ENCODE measurements at regions of chr3 and their contacts with region 1.

Region 1: DNA sequence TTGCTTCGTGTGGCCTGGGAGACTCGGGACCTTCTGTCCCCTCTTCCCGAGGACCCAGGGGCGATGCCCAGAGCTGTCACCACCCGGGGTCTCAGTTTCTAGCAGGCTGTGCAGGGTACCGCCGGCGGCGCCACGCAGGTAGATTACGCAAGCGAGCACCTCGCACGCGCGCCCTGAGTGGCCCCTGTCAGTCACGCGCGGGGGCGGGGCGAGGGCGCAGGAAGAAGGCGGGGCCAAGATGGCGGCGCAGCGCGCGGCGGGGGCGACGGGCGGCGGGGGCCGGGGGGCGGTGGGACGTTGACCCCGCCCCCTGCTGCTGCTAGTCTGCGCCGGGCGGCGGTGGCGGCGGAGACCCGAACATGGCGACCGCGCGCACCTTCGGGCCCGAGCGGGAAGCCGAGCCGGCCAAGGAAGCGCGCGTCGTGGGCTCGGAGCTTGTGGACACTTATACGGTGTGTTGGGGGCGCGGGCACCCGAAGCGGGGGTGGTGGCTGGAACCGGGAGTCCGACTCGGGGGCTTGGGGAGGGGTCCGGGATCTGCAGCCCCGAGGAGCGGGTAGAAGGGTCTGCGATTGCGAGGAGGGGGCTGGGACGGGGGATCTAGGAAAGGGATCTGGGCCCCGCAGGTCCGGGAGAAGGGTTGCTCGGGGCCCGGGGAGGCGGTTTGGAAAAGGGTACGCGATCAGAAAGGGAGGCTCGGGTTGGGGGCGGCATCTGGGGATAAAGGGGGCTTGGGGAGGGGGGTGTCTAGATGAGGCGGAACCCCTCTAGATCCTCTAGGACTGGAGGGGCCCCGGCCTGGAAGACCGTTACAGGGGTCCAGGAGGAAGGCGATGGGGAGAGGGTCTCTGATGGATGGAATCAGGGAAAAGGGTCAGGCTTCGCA is at the start of gene NISCH:
- DNase-seq: peak; percentile 98
- ATAC-seq: peak; percentile 96
- H3K4me3 Mint-ChIP-seq: peak within 1 kb of the TSS; percentile 91
- H3K27ac Mint-ChIP-seq: peak within 1 kb of the TSS; percentile 91
- H3K4me1 Mint-ChIP-seq: peaks cover 40% of the 10 kb centered on the region
- H3K27me3 Mint-ChIP-seq: no peaks in the 10 kb centered on the region
- CTCF ChIP-seq: no peak
- total RNA-seq, gene NISCH: 79.6 and 89.5 TPM in 2 replicates

Region 2: DNA sequence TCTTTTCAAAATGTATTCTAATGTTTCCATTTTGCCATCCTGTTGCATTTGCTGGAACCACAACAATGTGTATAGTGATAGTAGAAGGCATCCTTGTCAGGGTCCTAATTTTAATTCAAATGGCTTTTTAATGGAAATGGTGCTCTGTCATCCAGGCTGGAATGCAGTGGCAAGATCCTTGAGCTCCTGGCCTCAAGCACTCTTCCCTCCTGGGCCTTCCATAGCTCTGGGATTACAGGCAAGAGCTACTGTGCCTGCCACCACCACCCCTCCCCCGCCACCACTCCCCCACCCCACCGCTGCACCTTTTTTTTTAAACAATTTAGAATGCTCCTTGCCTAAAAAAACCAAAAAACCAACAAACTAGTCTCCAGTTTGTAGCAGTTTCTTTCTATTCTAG is 661.3 kb before region 1 on chr3:
- CTCF ChIA-PET with region 1: no interaction called
- POLR2A ChIA-PET with region 1: no interaction called
- intact Hi-C with region 1: no loop called
- DNase-seq: no peak
- ATAC-seq: no peak
- H3K4me3 Mint-ChIP-seq: no peak overlapping the region
- H3K27ac Mint-ChIP-seq: no peak overlapping the region
- H3K4me1 Mint-ChIP-seq: no peaks in the 10 kb centered on the region
- H3K27me3 Mint-ChIP-seq: peaks cover 18% of the 10 kb centered on the region
- CTCF ChIP-seq: no peak

Region 3: GRCh38 chr3:51982782-51983577 is 472.5 kb before region 1 on chr3 and contains the start of gene ACY1:
- CTCF ChIA-PET with region 1: no interaction called
- POLR2A ChIA-PET with region 1: no interaction called
- intact Hi-C with region 1: loop called (anchors 5 kb)
- DNase-seq: peak; percentile 70
- ATAC-seq: peak; percentile 79
- H3K4me3 Mint-ChIP-seq: peak within 1 kb of the TSS; percentile 86
- H3K27ac Mint-ChIP-seq: peak within 1 kb of the TSS; percentile 91
- H3K4me1 Mint-ChIP-seq: peaks cover 23% of the 10 kb centered on the region
- H3K27me3 Mint-ChIP-seq: no peaks in the 10 kb centered on the region
- CTCF ChIP-seq: no peak
- total RNA-seq, gene ACY1: 24.9 and 26.7 TPM in 2 replicates

Region 4: GRCh38 chr3:52238761-52239701 is 216.5 kb before region 1 on chr3 and contains the start of gene TWF2:
- CTCF ChIA-PET with region 1: no interaction called
- POLR2A ChIA-PET with region 1: interaction called, 4 read pairs
- intact Hi-C with region 1: loop called (anchors 1 kb)
- DNase-seq: peak; percentile 94
- ATAC-seq: peak; percentile 86
- H3K4me3 Mint-ChIP-seq: peak within 1 kb of the TSS; percentile 96
- H3K27ac Mint-ChIP-seq: peak within 1 kb of the TSS; percentile 93
- H3K4me1 Mint-ChIP-seq: peaks cover 72% of the 10 kb centered on the region
- H3K27me3 Mint-ChIP-seq: no peaks in the 10 kb centered on the region
- CTCF ChIP-seq: no peak
- total RNA-seq, gene TWF2: 74.1 and 76.7 TPM in 2 replicates

Region 5: DNA sequence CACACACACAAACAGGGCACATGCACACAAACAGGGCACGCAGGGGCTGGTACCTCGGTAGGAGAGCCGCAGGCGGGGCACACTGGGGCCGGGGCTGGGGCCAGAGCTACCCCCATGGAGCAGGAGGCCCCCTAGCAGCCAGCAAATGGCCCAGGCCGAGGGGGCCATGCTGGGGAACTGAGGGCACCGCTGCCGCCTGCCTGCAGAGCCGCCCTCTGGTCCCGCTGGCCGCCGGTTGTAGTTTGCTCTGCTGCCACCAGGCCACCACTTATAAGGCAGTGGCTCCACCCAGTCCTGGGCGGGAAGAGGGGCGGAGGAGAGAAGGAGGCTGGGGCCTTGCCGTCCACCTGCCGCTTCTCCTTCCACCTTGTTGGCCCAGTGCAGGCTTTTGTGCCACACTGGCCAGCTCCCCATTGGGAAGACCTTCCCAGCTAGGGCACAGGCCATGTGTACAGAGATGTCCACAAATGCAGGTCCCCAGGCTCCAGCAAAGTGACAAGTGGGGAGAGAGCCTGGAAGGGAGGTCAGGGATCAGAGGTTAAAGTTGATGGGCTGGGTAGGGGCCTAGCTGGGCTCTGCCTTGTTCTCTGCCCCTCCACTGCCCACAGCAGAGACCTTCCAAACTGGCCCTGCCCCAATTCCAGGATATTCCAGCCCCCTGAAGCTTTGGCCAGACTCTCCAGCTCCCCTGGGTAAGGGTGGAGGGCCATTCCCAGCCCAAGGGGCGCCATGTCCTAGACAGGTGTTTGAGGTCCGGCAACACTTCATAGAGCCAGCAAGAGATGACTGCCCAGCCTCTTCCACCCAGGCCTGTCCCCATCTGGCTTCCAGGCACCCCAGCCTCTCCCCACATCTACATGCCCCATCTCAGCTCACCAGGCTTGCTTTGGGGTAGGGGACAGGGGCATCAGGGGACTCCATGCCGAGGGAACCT is 10.4 kb before region 1 on chr3 and contains the start of gene SEMA3G:
- CTCF ChIA-PET with region 1: interaction called, 9 read pairs
- POLR2A ChIA-PET with region 1: no interaction called
- intact Hi-C with region 1: loop called (anchors 1 kb)
- DNase-seq: peak; percentile 62
- ATAC-seq: peak; percentile 97
- H3K4me3 Mint-ChIP-seq: no peak within 1 kb of the TSS
- H3K27ac Mint-ChIP-seq: no peak within 1 kb of the TSS
- H3K4me1 Mint-ChIP-seq: peaks cover 9% of the 10 kb centered on the region
- H3K27me3 Mint-ChIP-seq: peaks cover 3% of the 10 kb centered on the region
- CTCF ChIP-seq: no peak
- total RNA-seq, gene SEMA3G: not detected in 2 replicates

Region 6: GRCh38 chr3:52490939-52491526 is 35.5 kb after region 1 on chr3:
- CTCF ChIA-PET with region 1: no interaction called
- POLR2A ChIA-PET with region 1: no interaction called
- intact Hi-C with region 1: no loop called
- DNase-seq: no peak
- ATAC-seq: no peak
- H3K4me3 Mint-ChIP-seq: no peak overlapping the region
- H3K27ac Mint-ChIP-seq: no peak overlapping the region
- H3K4me1 Mint-ChIP-seq: no peaks in the 10 kb centered on the region
- H3K27me3 Mint-ChIP-seq: no peaks in the 10 kb centered on the region
- CTCF ChIP-seq: no peak

Region 7: DNA sequence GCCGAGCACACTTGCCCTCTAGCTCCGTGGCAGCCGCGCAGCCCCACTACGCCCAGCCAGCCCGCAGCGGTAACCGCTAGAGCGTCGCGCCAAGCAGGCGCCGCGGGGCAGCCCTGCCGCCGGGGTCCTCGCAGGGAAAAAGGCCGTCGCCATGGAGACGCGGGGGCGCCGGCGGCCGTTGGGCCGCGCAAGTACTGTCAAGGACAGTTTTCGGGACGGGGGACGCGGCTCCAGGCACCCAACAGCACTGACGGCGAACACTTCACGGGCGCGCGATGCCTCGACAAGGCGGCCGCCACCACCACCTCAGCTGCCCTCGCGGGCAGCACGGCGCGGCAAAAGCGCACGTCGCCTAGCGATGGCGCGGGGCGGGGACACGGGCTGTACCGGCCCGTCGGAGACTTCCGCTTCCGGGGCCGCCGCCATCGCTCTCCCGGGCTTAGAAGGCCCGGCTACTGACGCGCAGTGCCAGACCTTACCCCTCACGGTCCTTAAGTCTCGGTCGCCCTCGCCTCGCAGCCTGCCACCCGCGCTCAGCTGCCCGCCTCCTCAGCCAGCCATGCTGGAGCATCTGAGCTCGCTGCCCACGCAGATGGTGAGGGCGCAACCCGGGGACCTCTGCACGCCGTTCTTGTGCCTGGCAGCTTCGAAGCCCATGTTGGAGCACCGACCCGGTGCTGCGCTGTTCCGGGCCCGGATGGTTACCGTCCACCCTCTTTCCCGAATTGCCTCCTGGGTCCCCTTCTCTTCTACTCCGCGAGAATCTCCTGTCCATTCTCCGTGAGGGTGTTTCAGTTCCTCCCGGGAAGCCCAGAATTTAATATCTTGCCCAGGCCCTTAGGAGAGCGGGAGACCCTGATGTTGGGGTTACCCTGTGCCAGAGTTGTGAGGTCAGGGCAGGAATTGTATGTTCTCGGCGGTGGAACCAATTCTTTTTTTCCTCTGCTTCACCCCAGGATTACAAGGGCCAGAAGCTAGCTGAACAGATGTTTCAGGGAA is 250.5 kb after region 1 on chr3 and contains the starts of genes GLT8D1 and SPCS1:
- CTCF ChIA-PET with region 1: no interaction called
- POLR2A ChIA-PET with region 1: no interaction called
- intact Hi-C with region 1: loop called (anchors 5 kb)
- DNase-seq: peak; percentile 87
- ATAC-seq: peak; percentile 87
- H3K4me3 Mint-ChIP-seq: peak within 1 kb of the TSS; percentile 94
- H3K27ac Mint-ChIP-seq: peak within 1 kb of the TSS; percentile 92
- H3K4me1 Mint-ChIP-seq: peaks cover 48% of the 10 kb centered on the region
- H3K27me3 Mint-ChIP-seq: no peaks in the 10 kb centered on the region
- CTCF ChIP-seq: no peak
- total RNA-seq, gene GLT8D1: 20.4 and 22.2 TPM in 2 replicates
- total RNA-seq, gene SPCS1: 78.0 and 79.4 TPM in 2 replicates

Measured in activated B cell treated with CpG ODN at 0.5 μM for 24 hours (primary cell).